GM10248 (cell line): ENCODE measurements at regions of chr2 and their contacts with region 1.

Region 1: GRCh38 chr2:171509945-171510731 is 12.1 kb upstream of the CYBRD1 start:
- DNase-seq: peak; percentile 65
- CTCF ChIP-seq: no peak

Region 2: DNA sequence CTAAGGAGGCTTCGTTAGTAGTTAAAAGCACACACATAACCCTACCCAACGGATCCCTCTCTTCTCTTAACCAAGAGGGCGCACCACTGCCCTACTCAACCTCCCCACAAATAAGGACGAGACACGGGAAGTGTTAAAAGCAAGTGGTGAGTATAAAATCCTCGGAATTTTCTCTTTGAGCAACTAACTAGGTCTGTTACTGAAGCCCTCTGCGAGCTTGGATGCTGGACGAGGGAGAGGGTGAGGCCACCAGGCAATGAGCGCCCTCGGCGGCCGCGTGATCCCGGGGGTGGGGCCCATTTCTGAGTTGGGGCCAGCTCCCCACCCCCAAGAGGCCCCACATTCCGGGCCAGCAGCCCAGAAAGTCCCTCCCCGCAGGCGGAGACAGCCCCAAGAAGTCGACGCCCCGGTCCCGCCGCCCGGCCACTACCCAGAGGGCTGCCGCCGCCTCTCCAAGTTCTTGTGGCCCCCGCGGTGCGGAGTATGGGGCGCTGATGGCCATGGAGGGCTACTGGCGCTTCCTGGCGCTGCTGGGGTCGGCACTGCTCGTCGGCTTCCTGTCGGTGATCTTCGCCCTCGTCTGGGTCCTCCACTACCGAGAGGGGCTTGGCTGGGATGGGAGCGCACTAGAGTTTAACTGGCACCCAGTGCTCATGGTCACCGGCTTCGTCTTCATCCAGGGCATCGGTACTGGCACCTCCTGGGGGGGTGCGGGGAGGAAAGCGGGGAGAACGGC is 12.1 kb after region 1 on chr2 and contains the start of gene CYBRD1:
- CTCF ChIA-PET with region 1: interaction called, 20 read pairs
- POLR2A ChIA-PET with region 1: no interaction called
- DNase-seq: peak; percentile 84
- CTCF ChIP-seq: peak; percentile 11

Region 3: GRCh38 chr2:171598713-171599319 is 88.7 kb after region 1 on chr2:
- CTCF ChIA-PET with region 1: no interaction called
- POLR2A ChIA-PET with region 1: no interaction called
- DNase-seq: peak; percentile 80
- CTCF ChIP-seq: peak; percentile 84